ENCODE measurements at regions of chr17 and their contacts with region 1.

Region 1: DNA sequence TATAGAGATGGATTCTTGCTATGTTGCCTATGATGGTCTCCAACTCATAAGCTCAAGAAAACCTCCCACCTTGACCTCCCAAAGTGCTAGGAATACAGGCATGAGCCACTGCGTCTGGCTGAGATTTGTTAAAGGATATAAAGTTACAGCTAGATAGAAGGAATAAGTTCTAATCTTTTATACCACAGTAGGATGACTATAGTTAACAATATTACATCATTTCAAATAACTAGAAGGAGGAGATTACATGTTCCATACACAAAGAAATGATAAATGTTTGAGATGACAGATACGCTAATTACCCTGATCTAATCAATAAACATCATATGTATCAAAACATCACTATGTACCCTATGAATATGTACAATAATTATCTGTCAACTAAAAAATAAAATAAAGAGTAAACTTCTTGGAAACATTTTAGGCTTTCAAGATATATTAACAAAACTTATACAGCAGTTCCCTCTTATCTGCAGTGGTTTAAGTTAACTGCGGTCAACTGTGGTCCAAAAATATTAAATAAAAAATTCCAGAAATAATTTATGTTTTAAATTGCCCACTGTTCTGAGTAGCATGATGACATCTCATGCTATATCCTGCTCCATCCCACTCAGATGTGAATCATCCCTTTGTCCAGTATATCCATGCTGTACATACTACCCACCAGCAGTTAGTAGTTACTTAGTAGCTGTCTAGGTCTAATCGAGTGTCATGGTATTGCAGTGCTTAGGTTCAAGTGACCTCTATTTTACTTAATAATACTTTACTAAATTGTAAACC is 129.2 kb upstream of the NACA2 start:
- DNase-seq: no peak
- ATAC-seq: no peak
- H3K4me3 ChIP-seq: no peak overlapping the region
- H3K4me3 Mint-ChIP-seq: no peak overlapping the region
- H3K27ac ChIP-seq: no peak overlapping the region
- H3K27ac Mint-ChIP-seq: no peak overlapping the region
- H3K4me1 ChIP-seq: no peaks in the 10 kb centered on the region
- H3K4me1 Mint-ChIP-seq: no peaks in the 10 kb centered on the region
- H3K27me3 ChIP-seq: no peaks in the 10 kb centered on the region
- H3K27me3 Mint-ChIP-seq: no peaks in the 10 kb centered on the region

Region 2: DNA sequence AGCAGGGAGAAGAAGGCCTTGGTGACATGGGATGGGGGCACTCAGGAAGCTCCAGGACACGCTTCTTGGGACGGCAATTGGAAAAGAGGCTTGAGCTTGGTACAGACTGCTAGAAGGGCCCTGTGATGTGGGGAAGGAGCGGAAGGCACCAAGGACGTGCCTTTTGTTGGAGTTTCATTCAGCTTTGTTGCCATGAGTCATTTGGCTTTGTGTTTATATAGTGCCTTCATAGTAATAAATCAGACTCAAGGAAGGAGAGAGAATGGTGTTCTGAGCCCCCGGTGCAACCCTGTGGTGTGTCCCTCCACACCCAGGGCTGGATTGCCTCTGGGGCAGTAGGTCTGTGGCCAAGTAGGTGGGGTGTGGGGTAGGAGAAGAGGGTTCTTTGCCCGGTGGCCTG is 275.4 kb before region 1 on chr17:
- CTCF ChIA-PET with region 1: interaction called in 1 of 2 experiments, 13 read pairs
- POLR2A ChIA-PET with region 1: no interaction called
- DNase-seq: no peak
- ATAC-seq: no peak
- H3K4me3 ChIP-seq: no peak overlapping the region
- H3K4me3 Mint-ChIP-seq: no peak overlapping the region
- H3K27ac ChIP-seq: no peak overlapping the region
- H3K27ac Mint-ChIP-seq: no peak overlapping the region
- H3K4me1 ChIP-seq: no peaks in the 10 kb centered on the region
- H3K4me1 Mint-ChIP-seq: no peaks in the 10 kb centered on the region
- H3K27me3 ChIP-seq: peaks cover 9 to 41% of the 10 kb centered on the region in 2 experiments
- H3K27me3 Mint-ChIP-seq: peaks cover 53 to 68% of the 10 kb centered on the region in 2 donors

Region 3: DNA sequence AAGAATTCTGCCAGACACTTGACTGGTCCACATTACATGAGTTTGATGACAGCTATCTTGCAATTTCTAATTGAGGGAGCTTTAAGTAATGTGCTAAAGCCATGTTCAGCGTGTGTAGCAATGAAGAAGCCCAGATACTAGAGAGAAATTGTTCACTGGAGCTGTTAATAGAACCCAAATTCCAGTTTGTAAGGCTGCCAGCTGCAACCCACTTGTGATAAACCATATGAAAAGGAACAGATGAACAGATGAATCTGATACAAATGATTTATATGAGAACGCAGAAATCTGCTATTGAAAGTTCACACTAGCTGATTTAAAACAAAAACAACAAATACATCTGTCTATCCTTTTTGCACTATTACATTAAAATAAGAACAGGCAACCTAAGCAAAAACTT is 135.3 kb before region 1 on chr17:
- CTCF ChIA-PET with region 1: no interaction called
- POLR2A ChIA-PET with region 1: no interaction called
- DNase-seq: no peak
- ATAC-seq: no peak
- H3K4me3 ChIP-seq: no peak overlapping the region
- H3K4me3 Mint-ChIP-seq: no peak overlapping the region
- H3K27ac ChIP-seq: no peak overlapping the region
- H3K27ac Mint-ChIP-seq: no peak overlapping the region
- H3K4me1 ChIP-seq: no peaks in the 10 kb centered on the region
- H3K4me1 Mint-ChIP-seq: no peaks in the 10 kb centered on the region
- H3K27me3 ChIP-seq: no peaks in the 10 kb centered on the region
- H3K27me3 Mint-ChIP-seq: peaks cover 14 to 16% of the 10 kb centered on the region in 2 donors

Region 4: DNA sequence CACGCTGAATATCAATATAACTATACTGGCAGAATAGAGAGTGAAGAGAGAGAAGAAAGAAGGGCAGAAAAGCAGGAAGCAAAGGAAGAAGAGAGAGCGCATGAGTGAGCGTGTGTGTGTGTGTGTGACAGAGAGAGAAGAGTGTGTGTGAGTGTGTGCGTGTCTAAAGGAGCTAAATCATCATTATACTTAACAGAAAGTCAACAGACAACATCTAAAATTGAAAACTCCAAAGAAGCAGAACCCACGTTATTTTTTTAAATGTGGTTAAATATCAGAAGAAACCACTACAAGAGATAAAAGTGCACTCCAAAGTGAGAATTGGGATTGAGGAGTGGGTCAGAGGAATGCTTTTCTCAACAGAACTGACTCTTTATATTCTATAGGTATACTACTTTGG is 65.9 kb after region 1 on chr17:
- CTCF ChIA-PET with region 1: no interaction called
- POLR2A ChIA-PET with region 1: no interaction called
- DNase-seq: no peak
- ATAC-seq: no peak
- H3K4me3 ChIP-seq: no peak overlapping the region
- H3K4me3 Mint-ChIP-seq: no peak overlapping the region
- H3K27ac ChIP-seq: no peak overlapping the region
- H3K27ac Mint-ChIP-seq: no peak overlapping the region
- H3K4me1 ChIP-seq: no peaks in the 10 kb centered on the region
- H3K4me1 Mint-ChIP-seq: peaks cover 0 to 6% (median 0%) of the 10 kb centered on the region in 3 donors
- H3K27me3 ChIP-seq: no peaks in the 10 kb centered on the region
- H3K27me3 Mint-ChIP-seq: no peaks in the 10 kb centered on the region

Region 5: DNA sequence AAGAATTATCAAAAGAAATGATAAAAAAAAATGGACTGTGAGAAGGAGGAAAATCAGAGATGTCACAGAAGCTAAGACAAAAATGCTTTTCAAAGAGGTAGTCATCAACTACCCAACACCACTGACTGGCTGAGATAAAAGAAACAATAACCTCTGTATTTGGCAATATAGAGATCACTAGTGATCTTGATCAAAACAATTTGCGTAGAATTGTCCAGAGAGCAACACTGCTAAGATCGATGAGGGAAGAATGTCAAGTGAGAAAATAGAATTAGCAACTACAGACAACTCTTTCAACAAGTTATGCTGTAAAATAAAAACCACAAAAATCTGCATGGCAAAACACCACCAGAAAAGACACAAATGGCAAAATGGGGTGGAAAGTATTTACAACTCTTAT is 77.1 kb after region 1 on chr17:
- CTCF ChIA-PET with region 1: no interaction called
- POLR2A ChIA-PET with region 1: no interaction called
- DNase-seq: no peak
- ATAC-seq: no peak
- H3K4me3 ChIP-seq: no peak overlapping the region
- H3K4me3 Mint-ChIP-seq: no peak overlapping the region
- H3K27ac ChIP-seq: no peak overlapping the region
- H3K27ac Mint-ChIP-seq: no peak overlapping the region
- H3K4me1 ChIP-seq: no peaks in the 10 kb centered on the region
- H3K4me1 Mint-ChIP-seq: no peaks in the 10 kb centered on the region
- H3K27me3 ChIP-seq: no peaks in the 10 kb centered on the region
- H3K27me3 Mint-ChIP-seq: no peaks in the 10 kb centered on the region